ENCODE measurements at regions of chr1 and their contacts with region 1.

Region 1: GRCh38 chr1:109483672-109484518 is at the start of gene ATXN7L2:
- DNase-seq: peak; percentile 92
- H3K4me3 ChIP-seq: peak within 1 kb of the TSS; percentile 66 to 76 (median 69)
- H3K27ac ChIP-seq: peak within 1 kb of the TSS; percentile 83
- H3K4me1 ChIP-seq: peaks cover 14% of the 10 kb centered on the region
- H3K27me3 ChIP-seq: peaks cover 18 to 21% of the 10 kb centered on the region in 2 experiments
- CTCF ChIP-seq: no peak
- POLR2A ChIP-seq: peak; percentile 94
- total RNA-seq, gene ATXN7L2: 3.8 and 4.4 TPM in 2 replicates

Region 2: GRCh38 chr1:108725906-108726305 is 758.0 kb before region 1 on chr1:
- CTCF ChIA-PET with region 1: no interaction called
- POLR2A ChIA-PET with region 1: no interaction called
- dilution Hi-C with region 1: no loop called
- intact Hi-C with region 1: no loop called
- DNase-seq: no peak
- H3K4me3 ChIP-seq: no peak overlapping the region
- H3K27ac ChIP-seq: no peak overlapping the region
- H3K4me1 ChIP-seq: peaks cover 3% of the 10 kb centered on the region
- H3K27me3 ChIP-seq: peaks cover 0 to 9% of the 10 kb centered on the region in 2 experiments
- CTCF ChIP-seq: no peak
- POLR2A ChIP-seq: no peak

Region 3: DNA sequence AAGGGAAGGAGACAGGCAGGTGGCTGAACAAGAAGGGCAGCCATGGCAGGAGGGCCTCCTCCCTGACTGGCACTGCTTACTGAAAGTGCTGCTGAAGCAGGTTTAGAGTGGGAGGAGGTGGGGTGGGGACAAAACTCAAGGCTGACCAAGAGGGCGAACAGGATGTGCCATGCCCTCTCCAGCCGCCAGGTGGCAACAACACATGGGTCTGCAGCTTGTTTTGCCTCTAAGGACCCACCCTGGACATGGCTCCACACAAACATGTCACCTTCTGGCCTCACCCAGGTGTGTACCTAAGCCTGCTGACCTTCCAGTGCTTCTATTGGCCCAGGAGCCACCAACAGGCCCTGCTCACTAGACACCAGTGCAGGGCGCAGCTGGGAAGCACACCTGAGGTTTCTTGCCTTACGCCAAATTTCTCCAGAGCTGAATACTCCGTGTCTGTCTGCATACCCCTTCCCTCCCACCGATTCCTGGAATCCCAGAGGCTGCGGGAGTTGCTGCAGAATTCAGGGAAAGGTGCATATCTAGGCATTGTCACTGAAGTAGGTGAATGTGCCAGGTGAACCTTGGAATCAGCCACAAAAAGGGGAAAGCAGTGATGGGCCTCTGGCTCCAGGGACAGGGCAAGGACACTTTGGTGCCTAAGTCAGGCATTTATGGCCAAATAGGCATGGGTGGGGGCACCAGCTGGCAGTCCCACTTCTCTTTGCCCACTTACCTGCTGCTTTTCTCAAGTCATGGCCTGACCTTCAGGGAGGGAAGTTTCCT is 206.3 kb before region 1 on chr1:
- CTCF ChIA-PET with region 1: no interaction called
- POLR2A ChIA-PET with region 1: interaction called, 5 read pairs
- dilution Hi-C with region 1: no loop called
- intact Hi-C with region 1: loop called (anchors 10 kb)
- DNase-seq: peak; percentile 69
- H3K4me3 ChIP-seq: no peak overlapping the region
- H3K27ac ChIP-seq: no peak overlapping the region
- H3K4me1 ChIP-seq: peaks cover 12% of the 10 kb centered on the region
- H3K27me3 ChIP-seq: no peaks in the 10 kb centered on the region
- CTCF ChIP-seq: peak; percentile 78 to 95
- POLR2A ChIP-seq: no peak

Region 4: GRCh38 chr1:109426278-109427170 is 57.4 kb before region 1 on chr1 and contains the start of gene PSMA5:
- CTCF ChIA-PET with region 1: interaction called, 5 read pairs
- POLR2A ChIA-PET with region 1: interaction called, 3 read pairs
- dilution Hi-C with region 1: no loop called
- intact Hi-C with region 1: loop called (anchors 1 kb)
- DNase-seq: peak; percentile 99
- H3K4me3 ChIP-seq: peak within 1 kb of the TSS; percentile 63 to 89 (median 86)
- H3K27ac ChIP-seq: peak within 1 kb of the TSS; percentile 68
- H3K4me1 ChIP-seq: peaks cover 15% of the 10 kb centered on the region
- H3K27me3 ChIP-seq: no peaks in the 10 kb centered on the region
- CTCF ChIP-seq: no peak
- POLR2A ChIP-seq: peak; percentile 88
- total RNA-seq, gene PSMA5: 112 and 125 TPM in 2 replicates

Region 5: GRCh38 chr1:109493805-109494539 is 10.1 kb after region 1 on chr1 and contains the start of gene CYB561D1:
- CTCF ChIA-PET with region 1: interaction called, 27 read pairs
- POLR2A ChIA-PET with region 1: interaction called, 3 read pairs
- dilution Hi-C with region 1: no loop called
- intact Hi-C with region 1: loop called (anchors 1 kb)
- DNase-seq: peak; percentile 91
- H3K4me3 ChIP-seq: peak within 1 kb of the TSS; percentile 79 to 94 (median 80)
- H3K27ac ChIP-seq: peak within 1 kb of the TSS; percentile 42
- H3K4me1 ChIP-seq: peaks cover 18% of the 10 kb centered on the region
- H3K27me3 ChIP-seq: no peaks in the 10 kb centered on the region
- CTCF ChIP-seq: peak; percentile 98 to 99
- POLR2A ChIP-seq: peak; percentile 76
- total RNA-seq, gene CYB561D1: 6.9 and 7.3 TPM in 2 replicates

Region 6: DNA sequence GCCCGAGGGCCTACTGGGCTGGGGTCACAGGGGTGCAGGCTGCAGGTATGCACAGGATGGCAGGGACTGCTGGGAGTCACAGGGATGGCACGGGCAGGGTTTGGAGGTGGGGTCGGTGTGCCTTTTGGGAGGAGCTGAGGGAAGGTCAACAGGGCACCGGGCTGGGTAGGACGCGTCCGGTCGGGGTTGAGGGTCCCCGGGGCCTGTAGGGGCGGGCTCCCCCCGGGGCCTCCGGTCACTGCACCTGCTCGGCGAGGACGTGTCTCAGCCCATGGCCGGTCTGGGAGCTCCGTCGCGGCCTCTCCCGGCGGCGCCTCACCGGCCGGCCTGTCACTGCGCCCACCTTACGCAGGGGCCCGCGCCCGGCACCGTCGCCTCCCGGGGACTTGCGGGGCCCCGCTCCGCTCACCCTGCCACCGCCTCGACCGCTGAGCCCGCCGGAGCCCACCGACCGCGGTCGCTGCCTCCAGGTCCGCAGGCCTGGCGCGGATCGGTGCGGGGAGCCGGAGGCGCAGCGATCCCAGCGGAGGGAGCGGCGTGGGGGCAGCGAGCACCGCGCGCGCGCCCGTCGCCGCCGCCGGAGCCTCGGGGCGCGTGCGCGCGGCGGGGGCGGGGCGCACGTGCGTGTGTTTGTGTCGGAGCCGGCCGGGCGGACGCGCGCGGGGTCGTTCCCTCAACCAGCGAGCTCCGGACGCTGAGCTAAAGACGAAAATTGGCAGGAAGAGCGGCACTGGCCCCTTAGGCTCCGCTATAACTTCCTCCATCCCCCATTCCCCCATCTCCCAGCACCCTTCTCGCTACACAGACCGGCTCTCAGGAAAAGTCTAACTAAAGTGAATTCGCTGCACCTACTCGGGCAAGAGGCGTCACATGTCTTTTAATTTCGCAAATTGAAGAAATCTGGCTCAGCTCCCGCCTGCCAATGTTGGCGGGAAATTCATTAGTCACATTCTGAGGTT is 25.6 kb after region 1 on chr1 and contains the start of gene AMIGO1:
- CTCF ChIA-PET with region 1: no interaction called
- POLR2A ChIA-PET with region 1: no interaction called
- dilution Hi-C with region 1: no loop called
- intact Hi-C with region 1: loop called (anchors 1 kb)
- DNase-seq: peak; percentile 54
- H3K4me3 ChIP-seq: peak within 1 kb of the TSS; percentile 42 to 49 (median 47)
- H3K27ac ChIP-seq: no peak within 1 kb of the TSS
- H3K4me1 ChIP-seq: peaks cover 6% of the 10 kb centered on the region
- H3K27me3 ChIP-seq: peaks cover 10 to 21% of the 10 kb centered on the region in 2 experiments
- CTCF ChIP-seq: no peak
- POLR2A ChIP-seq: no peak
- total RNA-seq, gene AMIGO1: 0.78 and 0.88 TPM in 2 replicates

Region 7: DNA sequence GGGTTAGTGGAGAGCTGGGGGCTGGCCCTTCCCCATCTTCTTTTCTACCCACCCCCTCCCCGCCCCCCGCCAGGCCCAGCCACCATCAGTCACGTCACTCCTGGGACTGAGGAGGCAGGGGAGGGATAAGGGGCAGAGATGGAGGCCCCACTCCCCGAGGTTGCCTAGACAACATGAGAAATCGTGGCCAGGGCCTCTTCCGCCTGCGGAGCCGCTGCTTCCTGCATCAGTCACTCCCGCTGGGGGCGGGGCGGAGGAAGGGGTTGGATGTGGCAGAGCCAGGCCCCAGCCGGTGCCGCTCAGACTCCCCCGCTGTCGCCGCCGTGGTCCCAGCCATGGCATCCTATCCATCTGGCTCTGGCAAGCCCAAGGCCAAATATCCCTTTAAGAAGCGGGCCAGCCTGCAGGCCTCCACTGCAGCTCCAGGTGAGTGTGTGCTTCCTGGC is 137.0 kb after region 1 on chr1:
- CTCF ChIA-PET with region 1: no interaction called
- POLR2A ChIA-PET with region 1: no interaction called
- dilution Hi-C with region 1: no loop called
- intact Hi-C with region 1: loop called (anchors 10 kb)
- DNase-seq: peak; percentile 95
- H3K4me3 ChIP-seq: peak overlapping the region; percentile 74 to 83 (median 76)
- H3K27ac ChIP-seq: peak overlapping the region; percentile 97
- H3K4me1 ChIP-seq: peaks cover 49% of the 10 kb centered on the region
- H3K27me3 ChIP-seq: no peaks in the 10 kb centered on the region
- CTCF ChIP-seq: no peak
- POLR2A ChIP-seq: no peak

Region 8: GRCh38 chr1:109762821-109763645 is 279.1 kb after region 1 on chr1:
- CTCF ChIA-PET with region 1: no interaction called
- POLR2A ChIA-PET with region 1: no interaction called
- dilution Hi-C with region 1: no loop called
- intact Hi-C with region 1: loop called (anchors 10 kb)
- DNase-seq: peak; percentile 88
- H3K4me3 ChIP-seq: no peak overlapping the region
- H3K27ac ChIP-seq: peak overlapping the region; percentile 90
- H3K4me1 ChIP-seq: peaks cover 14% of the 10 kb centered on the region
- H3K27me3 ChIP-seq: no peaks in the 10 kb centered on the region
- CTCF ChIP-seq: no peak
- POLR2A ChIP-seq: peak; percentile 24